ENCODE measurements at regions of chr14 and their contacts with region 1.

Region 1: DNA sequence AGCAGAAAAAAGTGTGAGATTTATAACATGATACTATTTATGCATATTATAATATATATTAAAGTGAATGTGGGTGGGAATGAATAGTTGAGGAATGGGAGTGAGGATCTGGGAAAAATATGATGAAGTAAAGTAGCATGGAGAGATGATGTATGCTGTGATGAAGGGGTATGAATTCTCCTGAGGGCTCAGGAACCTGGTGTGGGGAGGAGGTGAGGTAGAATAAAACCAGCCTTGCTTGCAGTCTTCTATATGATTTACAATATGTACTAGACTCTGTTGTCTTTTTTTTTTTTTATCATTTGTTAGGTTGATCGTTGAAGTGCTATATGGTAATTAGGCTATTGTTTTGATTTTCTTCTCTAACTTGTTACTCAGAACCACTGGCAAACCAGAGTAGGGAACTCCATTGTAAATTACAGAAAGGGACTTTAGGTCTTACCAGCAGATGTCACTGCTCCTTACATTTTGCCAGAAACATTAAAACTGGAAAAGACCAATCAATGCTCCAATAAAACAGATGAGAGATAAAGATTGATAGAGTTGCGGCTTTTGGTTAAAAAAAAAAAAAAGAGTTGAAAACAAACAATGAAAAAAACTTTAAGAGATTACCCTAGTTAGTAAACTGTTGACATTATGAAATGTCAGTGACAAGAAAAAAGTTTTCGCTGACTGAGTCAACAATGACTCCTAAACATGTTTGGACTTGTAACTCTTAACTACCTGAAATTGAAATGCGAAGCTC is 39.9 kb downstream of the ATL1 start:
- DNase-seq: no peak
- ATAC-seq: peak; percentile 68
- H3K4me3 ChIP-seq: no peak overlapping the region
- H3K27ac ChIP-seq: no peak overlapping the region
- H3K4me1 ChIP-seq: no peaks in the 10 kb centered on the region
- H3K27me3 ChIP-seq: no peaks in the 10 kb centered on the region
- CTCF ChIP-seq: peak; percentile 53

Region 2: GRCh38 chr14:50726372-50727107 is 126.7 kb after region 1 on chr14:
- intact Hi-C with region 1: no loop called
- DNase-seq: no peak
- ATAC-seq: no peak
- H3K4me3 ChIP-seq: no peak overlapping the region
- H3K27ac ChIP-seq: no peak overlapping the region
- H3K4me1 ChIP-seq: no peaks in the 10 kb centered on the region
- H3K27me3 ChIP-seq: no peaks in the 10 kb centered on the region
- CTCF ChIP-seq: no peak

Region 3: DNA sequence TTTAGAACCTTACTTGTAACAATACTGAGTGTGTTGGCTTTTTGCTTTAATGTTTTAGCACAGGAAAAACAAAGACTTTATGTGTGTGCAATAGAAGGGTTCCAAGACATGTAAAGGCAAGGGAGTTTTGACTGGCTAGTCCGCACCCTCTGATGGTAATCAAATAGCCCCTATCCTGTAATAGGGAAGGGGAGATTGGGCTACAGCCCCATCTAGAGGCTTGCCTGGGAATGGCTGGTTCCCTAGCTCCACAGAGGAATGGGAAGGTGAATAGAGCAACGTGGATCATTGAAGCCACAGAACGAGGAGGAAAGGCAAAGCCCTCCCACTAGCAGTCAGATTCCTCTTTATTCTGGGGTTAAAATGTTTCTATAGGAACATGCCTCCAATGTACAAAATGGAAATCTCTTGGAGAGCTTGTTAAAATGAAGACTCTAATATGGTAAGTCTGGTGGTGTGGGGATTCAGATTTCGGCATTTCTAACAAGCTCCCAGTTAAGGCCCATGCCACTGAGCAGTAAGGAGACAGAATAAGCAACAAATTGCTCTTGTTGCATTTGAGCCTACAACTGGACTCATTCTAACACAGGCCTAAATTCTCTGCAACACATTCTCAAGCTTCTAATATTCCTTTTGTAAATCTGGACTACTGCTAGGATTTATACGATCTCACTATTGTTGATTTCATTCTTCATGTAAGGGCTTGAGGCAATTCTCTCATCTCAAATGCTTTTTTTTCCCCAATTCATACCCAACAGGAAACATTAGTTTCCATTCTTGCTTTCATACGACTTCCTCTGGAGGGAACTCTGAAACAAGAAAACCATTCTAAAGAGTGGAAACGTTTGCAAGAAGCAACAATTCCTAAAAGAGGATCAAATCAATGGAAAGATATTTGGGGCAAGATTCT is 174.0 kb after region 1 on chr14:
- intact Hi-C with region 1: loop called (anchors 10 kb)
- DNase-seq: no peak
- ATAC-seq: peak; percentile 84
- H3K4me3 ChIP-seq: no peak overlapping the region
- H3K27ac ChIP-seq: no peak overlapping the region
- H3K4me1 ChIP-seq: no peaks in the 10 kb centered on the region
- H3K27me3 ChIP-seq: no peaks in the 10 kb centered on the region
- CTCF ChIP-seq: peak; percentile 76